ENCODE measurements at regions of chr7 and their contacts with region 1.

Region 1: DNA sequence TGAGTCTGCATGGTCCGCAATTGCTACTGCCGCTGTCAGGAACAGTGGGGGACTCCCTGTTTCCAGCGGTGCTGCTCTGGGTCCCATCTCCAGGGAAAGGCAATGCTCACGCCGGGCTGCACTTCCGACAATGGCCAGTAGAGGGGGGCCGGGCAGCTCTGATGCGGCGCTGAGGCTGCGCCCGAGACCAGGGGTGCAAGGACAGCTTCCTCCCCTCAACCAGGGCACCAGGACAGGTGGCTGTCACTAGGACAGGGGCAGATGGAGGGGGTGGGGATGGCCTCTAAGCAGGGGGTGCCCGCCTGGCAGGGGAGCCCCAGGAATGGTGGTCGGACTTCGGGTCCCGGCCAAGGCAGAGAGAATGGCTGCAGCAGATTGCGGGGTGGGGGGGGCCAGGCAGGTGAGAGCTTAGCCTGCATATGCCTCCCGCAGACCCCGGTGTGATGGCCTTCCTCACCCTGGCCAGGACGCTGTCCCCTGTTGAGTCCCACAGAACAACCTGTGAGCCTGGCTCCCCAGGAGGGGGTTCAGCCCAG is 71.0 kb upstream of the KCTD7 start:
- DNase-seq: peak; percentile 68 to 90 (median 90)
- ATAC-seq: peak; percentile 64 to 80
- H3K4me3 ChIP-seq: no peak overlapping the region
- H3K27ac ChIP-seq: no peak overlapping the region
- H3K4me1 ChIP-seq: no peaks in the 10 kb centered on the region
- H3K27me3 ChIP-seq: no peaks in the 10 kb centered on the region

Region 2: GRCh38 chr7:66591799-66592596 is 34.3 kb after region 1 on chr7:
- intact Hi-C with region 1: no loop called
- DNase-seq: peak; percentile 93 to 96 (median 95)
- ATAC-seq: peak; percentile 98
- H3K4me3 ChIP-seq: peak overlapping the region; percentile 48
- H3K27ac ChIP-seq: peak overlapping the region; percentile 5
- H3K4me1 ChIP-seq: peaks cover 2% of the 10 kb centered on the region
- H3K27me3 ChIP-seq: no peaks in the 10 kb centered on the region

Region 3: GRCh38 chr7:67006971-67007370 is 449.3 kb after region 1 on chr7:
- intact Hi-C with region 1: loop called in 1 of 4 experiments (anchors 5 kb)
- DNase-seq: no peak
- ATAC-seq: no peak
- H3K4me3 ChIP-seq: no peak overlapping the region
- H3K27ac ChIP-seq: no peak overlapping the region
- H3K4me1 ChIP-seq: no peaks in the 10 kb centered on the region
- H3K27me3 ChIP-seq: no peaks in the 10 kb centered on the region